ENCODE measurements at regions of chr3 and their contacts with region 1.

Region 1: GRCh38 chr3:172586436-172586835 is 63.2 kb upstream of the TNFSF10 start:
- DNase-seq: peak in 1 of 2 donors; percentile 24
- H3K4me3 ChIP-seq: no peak overlapping the region
- H3K27ac ChIP-seq: peak overlapping the region in 3 of 5 donors; percentile 60 to 84 (median 63)
- H3K4me1 ChIP-seq: peaks cover 9 to 24% (median 15%) of the 10 kb centered on the region in 4 donors
- H3K27me3 ChIP-seq: no peaks in the 10 kb centered on the region
- CTCF ChIP-seq: no peak
- EP300 ChIP-seq: no peak
- POLR2A ChIP-seq: no peak

Region 2: DNA sequence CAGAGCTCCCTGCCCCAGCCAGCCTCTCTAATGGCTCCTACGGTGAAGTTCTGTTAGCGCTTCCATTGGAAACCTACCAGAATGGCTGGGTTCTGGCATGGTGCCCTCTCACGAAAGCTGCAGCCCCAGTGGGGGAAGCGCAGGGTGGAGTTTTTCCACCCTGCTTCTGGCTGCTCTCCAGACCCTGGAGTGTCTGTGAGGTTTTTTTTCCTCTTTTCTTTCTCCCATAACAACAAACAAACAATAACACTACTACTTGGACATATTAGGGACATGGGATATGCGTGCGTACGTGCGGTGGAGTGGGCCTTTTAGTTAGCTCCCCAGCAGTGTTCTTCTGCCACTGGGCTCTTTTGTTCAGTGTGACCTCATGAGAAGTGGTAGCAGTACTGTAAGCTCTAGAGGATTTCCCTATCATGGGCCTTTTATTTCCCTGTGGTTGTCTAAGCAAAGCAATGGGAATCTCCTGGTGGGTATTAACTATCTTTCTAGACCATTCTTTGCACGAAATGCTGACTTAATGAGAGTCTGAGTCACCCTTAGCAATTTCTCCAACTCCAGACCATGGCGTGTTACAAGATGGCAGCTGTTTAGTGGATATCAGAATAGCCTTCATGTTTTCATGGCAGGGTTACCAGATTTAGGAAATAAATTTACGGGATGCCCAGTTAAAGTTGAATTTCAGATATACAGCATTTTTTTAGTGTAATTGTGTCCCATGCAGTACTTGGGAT is 385.1 kb before region 1 on chr3:
- intact Hi-C with region 1: no loop called
- DNase-seq: peak; percentile 73 to 85
- H3K4me3 ChIP-seq: no peak overlapping the region
- H3K27ac ChIP-seq: peak overlapping the region; percentile 71 to 80 (median 79)
- H3K4me1 ChIP-seq: peaks cover 35 to 61% (median 46%) of the 10 kb centered on the region in 4 donors
- H3K27me3 ChIP-seq: no peaks in the 10 kb centered on the region
- CTCF ChIP-seq: no peak
- EP300 ChIP-seq: no peak
- POLR2A ChIP-seq: no peak

Region 3: GRCh38 chr3:172501560-172501959 is 84.9 kb before region 1 on chr3:
- intact Hi-C with region 1: loop called (anchors 5 kb)
- DNase-seq: no peak
- H3K4me3 ChIP-seq: no peak overlapping the region
- H3K27ac ChIP-seq: no peak overlapping the region
- H3K4me1 ChIP-seq: no peaks in the 10 kb centered on the region
- H3K27me3 ChIP-seq: no peaks in the 10 kb centered on the region
- CTCF ChIP-seq: no peak
- EP300 ChIP-seq: no peak
- POLR2A ChIP-seq: no peak

Region 4: GRCh38 chr3:172666873-172667694 is 80.6 kb after region 1 on chr3:
- intact Hi-C with region 1: no loop called
- DNase-seq: peak; percentile 82 to 91
- H3K4me3 ChIP-seq: no peak overlapping the region
- H3K27ac ChIP-seq: no peak overlapping the region
- H3K4me1 ChIP-seq: peaks cover 0 to 17% (median 7%) of the 10 kb centered on the region in 4 donors
- H3K27me3 ChIP-seq: no peaks in the 10 kb centered on the region
- CTCF ChIP-seq: peak in 6 of 7 experiments; percentile 22 to 95 (median 88)
- EP300 ChIP-seq: no peak
- POLR2A ChIP-seq: no peak

Region 5: GRCh38 chr3:172836390-172836997 is 250.1 kb after region 1 on chr3:
- intact Hi-C with region 1: no loop called
- DNase-seq: peak in 1 of 2 donors; percentile 63
- H3K4me3 ChIP-seq: no peak overlapping the region
- H3K27ac ChIP-seq: no peak overlapping the region
- H3K4me1 ChIP-seq: peaks cover 0 to 15% (median 0%) of the 10 kb centered on the region in 4 donors
- H3K27me3 ChIP-seq: no peaks in the 10 kb centered on the region
- CTCF ChIP-seq: peak in 4 of 7 experiments; percentile 14 to 49 (median 47)
- EP300 ChIP-seq: no peak
- POLR2A ChIP-seq: no peak

Measured in stomach (tissue), 19 donors.